Posterior cingulate gyrus (tissue), 11 donors: ENCODE measurements at regions of chr18 and their contacts with region 1.

Region 1: DNA sequence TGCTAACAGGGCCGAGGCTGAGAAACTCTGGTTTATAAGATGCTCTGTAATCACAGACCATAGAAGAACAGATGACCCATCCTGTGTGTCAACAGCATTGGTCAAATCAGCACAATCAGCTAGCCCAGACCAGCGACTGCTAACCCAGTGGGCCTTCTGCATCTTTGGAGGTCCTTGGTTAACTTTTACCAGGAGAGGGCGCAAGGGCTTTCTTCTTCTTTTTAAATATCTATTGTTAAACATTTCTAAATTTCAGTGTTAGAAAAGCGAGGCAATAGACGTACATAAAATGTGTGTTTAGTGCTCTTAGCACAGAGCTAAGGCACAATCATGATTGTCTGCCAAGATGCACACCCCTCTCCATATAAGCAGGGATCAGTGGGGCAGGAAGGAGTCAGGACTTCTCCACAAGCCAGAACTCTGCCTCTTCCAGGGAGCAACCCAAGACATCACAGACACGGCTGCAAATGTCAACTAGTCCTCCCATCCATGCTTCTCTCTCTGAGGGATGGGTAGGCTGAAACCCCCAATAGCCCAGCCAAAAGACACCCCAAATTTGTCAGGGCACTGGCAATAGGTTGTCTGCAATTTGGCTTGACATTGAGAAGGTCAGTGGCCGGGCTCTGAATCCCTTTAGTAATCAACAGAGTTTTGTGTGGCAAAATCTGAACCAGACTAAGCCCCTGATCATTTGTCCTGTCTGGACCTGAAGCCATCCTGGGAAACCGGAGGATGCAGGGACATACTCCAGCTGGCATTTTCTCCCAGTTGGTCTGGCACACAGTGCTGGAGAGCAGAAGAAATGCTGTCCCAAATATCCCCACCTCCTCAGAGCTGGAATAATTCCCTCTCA is 188.2 kb downstream of the BCL2 start:
- DNase-seq: peak in 4 of 10 donors; percentile 42 to 79 (median 58)

Region 2: DNA sequence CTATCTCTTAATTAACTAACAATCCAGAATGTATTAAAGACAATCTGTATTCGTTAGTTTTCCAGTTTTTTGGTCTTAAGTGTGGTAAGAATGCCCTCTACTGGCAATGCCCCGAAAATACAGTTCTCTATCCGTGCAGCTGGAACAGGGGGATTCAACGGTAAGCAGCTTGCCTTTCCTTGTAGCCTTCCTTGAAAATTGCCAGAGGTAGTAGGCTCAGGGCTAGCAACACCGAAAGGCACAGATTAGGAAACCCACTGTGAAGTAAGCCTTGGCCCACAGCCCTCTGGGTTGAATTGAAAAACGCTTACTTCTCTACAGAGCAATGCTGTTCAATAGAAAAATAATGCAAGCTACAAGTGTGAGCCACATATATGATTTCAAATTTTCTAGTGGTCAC is 308.0 kb after region 1 on chr18:
- intact Hi-C with region 1: loop called (anchors 10 kb)
- DNase-seq: peak in 4 of 10 donors; percentile 34 to 53 (median 41)